ENCODE measurements at regions of chr6 and their contacts with region 1.

Region 1: GRCh38 chr6:15816666-15817065 is 153.8 kb upstream of the DTNBP1 start:
- DNase-seq: no peak
- ATAC-seq: no peak
- H3K4me3 ChIP-seq: no peak overlapping the region
- H3K27ac ChIP-seq: no peak overlapping the region
- H3K4me1 ChIP-seq: no peaks in the 10 kb centered on the region
- H3K27me3 ChIP-seq: peaks cover 14% of the 10 kb centered on the region
- CTCF ChIP-seq: no peak
- POLR2A ChIP-seq: no peak
- RAD21 ChIP-seq: no peak

Region 2: GRCh38 chr6:15770347-15771143 is 46.1 kb before region 1 on chr6:
- CTCF ChIA-PET with region 1: no interaction called
- POLR2A ChIA-PET with region 1: interaction called, 26 read pairs
- dilution Hi-C with region 1: no loop called
- in situ Hi-C with region 1: no loop called
- intact Hi-C with region 1: no loop called
- DNase-seq: peak; percentile 8
- ATAC-seq: no peak
- H3K4me3 ChIP-seq: no peak overlapping the region
- H3K27ac ChIP-seq: no peak overlapping the region
- H3K4me1 ChIP-seq: 0 out of 2 replicates have a peak, but pooled peaks cover 3% of the 10 kb centered on the region
- H3K27me3 ChIP-seq: peaks cover 9% of the 10 kb centered on the region
- CTCF ChIP-seq: no peak
- POLR2A ChIP-seq: no peak
- RAD21 ChIP-seq: no peak